Right cardiac atrium (tissue), 5 donors: ENCODE measurements at regions of chr15 and their contacts with region 1.

Region 1: GRCh38 chr15:90648137-90649070 is 68.7 kb upstream of the BLM start:
- DNase-seq: peak; percentile 71 to 83 (median 78)
- ATAC-seq: peak; percentile 83 to 90
- H3K4me3 ChIP-seq: no peak overlapping the region
- H3K27ac ChIP-seq: peak overlapping the region; percentile 57
- H3K4me1 ChIP-seq: no peaks in the 10 kb centered on the region
- H3K27me3 ChIP-seq: no peaks in the 10 kb centered on the region

Region 2: GRCh38 chr15:90691982-90692773 is 43.8 kb after region 1 on chr15:
- intact Hi-C with region 1: loop called (anchors 5 to 10 kb)
- DNase-seq: no peak
- ATAC-seq: no peak
- H3K4me3 ChIP-seq: no peak overlapping the region
- H3K27ac ChIP-seq: no peak overlapping the region
- H3K4me1 ChIP-seq: no peaks in the 10 kb centered on the region
- H3K27me3 ChIP-seq: no peaks in the 10 kb centered on the region

Region 3: GRCh38 chr15:90774731-90775484 is 126.5 kb after region 1 on chr15:
- intact Hi-C with region 1: loop called in 1 of 4 experiments (anchors 10 kb)
- DNase-seq: no peak
- ATAC-seq: no peak
- H3K4me3 ChIP-seq: no peak overlapping the region
- H3K27ac ChIP-seq: no peak overlapping the region
- H3K4me1 ChIP-seq: no peaks in the 10 kb centered on the region
- H3K27me3 ChIP-seq: no peaks in the 10 kb centered on the region

Region 4: GRCh38 chr15:90886041-90886614 is 237.7 kb after region 1 on chr15:
- intact Hi-C with region 1: loop called (anchors 1 to 5 kb)
- DNase-seq: peak; percentile 82 to 94 (median 93)
- ATAC-seq: peak; percentile 62 to 66
- H3K4me3 ChIP-seq: peak overlapping the region; percentile 66
- H3K27ac ChIP-seq: peak overlapping the region; percentile 92
- H3K4me1 ChIP-seq: peaks cover 4% of the 10 kb centered on the region
- H3K27me3 ChIP-seq: no peaks in the 10 kb centered on the region